Dorsolateral prefrontal cortex (tissue), 120 donors: ENCODE measurements at regions of chr5 and their contacts with region 1.

Region 1: DNA sequence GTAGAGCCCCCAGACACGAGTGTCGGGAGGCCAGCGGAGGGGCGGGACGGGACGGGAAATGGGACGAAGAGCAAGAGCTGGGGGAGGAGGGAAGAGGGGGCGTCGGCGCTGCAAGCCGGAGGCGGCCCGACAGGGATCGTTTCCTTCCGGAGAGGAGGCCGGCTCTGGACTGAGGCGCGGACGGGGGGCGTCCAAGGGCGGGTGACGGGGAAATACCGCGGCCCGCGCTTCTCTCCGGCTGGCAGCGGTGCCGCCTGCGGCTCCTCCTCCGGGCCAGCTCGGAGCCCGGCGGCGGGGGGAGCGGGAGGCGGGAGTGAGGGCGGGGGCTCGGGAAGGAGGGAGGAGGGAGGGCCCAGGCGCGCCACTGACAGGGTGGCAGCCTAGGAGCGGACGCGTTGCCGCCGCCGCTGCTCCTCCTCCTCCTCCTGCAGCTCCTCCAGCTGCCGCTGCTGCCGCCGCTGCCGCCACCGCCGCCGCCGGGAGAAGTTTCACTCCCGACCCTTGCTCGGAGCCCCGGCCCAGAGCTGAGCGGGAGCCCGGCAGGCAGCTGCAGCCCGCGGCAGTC is at the start of gene CHSY3:
- DNase-seq: peak; percentile 39 to 92 (median 84)
- H3K4me3 ChIP-seq: peak within 1 kb of the TSS; percentile 59 to 90 (median 78)
- H3K27ac ChIP-seq: peak within 1 kb of the TSS in 57 of 59 donors; percentile 29 to 92 (median 79)
- H3K27me3 ChIP-seq: no peaks in the 10 kb centered on the region
- CTCF ChIP-seq: peak in 31 of 56 donors; percentile 10 to 60 (median 28)
- total RNA-seq, gene CHSY3: 3.7 to 18.6 (median 11.0) TPM

Region 2: DNA sequence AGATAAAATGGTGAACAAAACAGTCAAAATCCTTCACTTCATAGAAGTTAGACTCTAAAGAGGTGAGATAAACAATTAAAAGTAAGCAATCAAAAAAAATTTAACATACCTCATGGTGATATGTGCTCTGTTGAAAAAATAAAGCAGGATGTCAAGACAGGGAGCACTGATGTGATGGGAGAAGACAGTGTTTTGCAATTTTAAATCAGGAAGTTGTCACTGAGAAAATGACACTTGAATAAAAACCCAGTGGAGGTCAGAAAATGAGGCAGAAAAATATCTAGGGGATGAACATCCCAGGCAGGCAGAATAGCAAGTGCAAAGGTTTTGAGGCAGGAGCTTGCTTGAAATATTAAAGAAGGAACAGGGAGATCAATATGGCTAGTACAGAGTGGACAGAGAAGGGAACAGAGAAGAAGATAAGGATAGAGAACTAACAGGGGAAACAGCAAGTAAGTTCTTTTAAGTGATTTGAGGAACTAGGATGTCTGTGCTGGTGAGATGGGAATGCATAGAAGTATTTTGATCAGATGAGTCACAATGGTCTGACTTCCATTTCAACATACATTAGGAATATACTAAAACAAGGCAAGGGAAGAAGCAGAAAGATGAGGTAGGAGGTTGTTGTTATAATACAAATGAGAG is 130.5 kb after region 1 on chr5:
- intact Hi-C with region 1: loop called in 1 of 2 experiments (anchors 10 kb)
- DNase-seq: no peak
- H3K4me3 ChIP-seq: peak overlapping the region in 13 of 59 donors; percentile 1 to 39 (median 8)
- H3K27ac ChIP-seq: peak overlapping the region in 52 of 59 donors; percentile 6 to 81 (median 54)
- H3K27me3 ChIP-seq: no peaks in the 10 kb centered on the region
- CTCF ChIP-seq: no peak

Region 3: GRCh38 chr5:130141659-130142320 is 237.6 kb after region 1 on chr5:
- intact Hi-C with region 1: loop called in 1 of 2 experiments (anchors 5 kb)
- DNase-seq: peak in 5 of 10 donors; percentile 37 to 59 (median 45)
- H3K4me3 ChIP-seq: no peak overlapping the region
- H3K27ac ChIP-seq: no peak overlapping the region
- H3K27me3 ChIP-seq: no peaks in the 10 kb centered on the region
- CTCF ChIP-seq: peak in 52 of 56 donors; percentile 14 to 83 (median 59)